ENCODE measurements at regions of chr2 and their contacts with region 1.

Region 1: GRCh38 chr2:102033031-102033749 is 41.4 kb downstream of the IL1R2 start:
- DNase-seq: peak in 1 of 2 experiments; percentile 67
- ATAC-seq: peak; percentile 65 to 86
- H3K4me3 ChIP-seq: no peak overlapping the region
- H3K27ac ChIP-seq: peak overlapping the region; percentile 71 to 82
- H3K4me1 ChIP-seq: peaks cover 32% of the 10 kb centered on the region
- CTCF ChIP-seq: no peak
- EP300 ChIP-seq: no peak
- POLR2A ChIP-seq: no peak
- RAD21 ChIP-seq: no peak

Region 2: GRCh38 chr2:101958061-101958460 is 75.1 kb before region 1 on chr2:
- CTCF ChIA-PET with region 1: no interaction called
- POLR2A ChIA-PET with region 1: no interaction called
- DNase-seq: no peak
- ATAC-seq: no peak
- H3K4me3 ChIP-seq: no peak overlapping the region
- H3K27ac ChIP-seq: no peak overlapping the region
- H3K4me1 ChIP-seq: no peaks in the 10 kb centered on the region
- CTCF ChIP-seq: no peak
- EP300 ChIP-seq: no peak
- POLR2A ChIP-seq: no peak
- RAD21 ChIP-seq: no peak

Region 3: GRCh38 chr2:102005989-102006885 is 27.0 kb before region 1 on chr2:
- CTCF ChIA-PET with region 1: interaction called, 10 read pairs
- POLR2A ChIA-PET with region 1: no interaction called
- DNase-seq: peak; percentile 43 to 52
- ATAC-seq: peak; percentile 86 to 98
- H3K4me3 ChIP-seq: no peak overlapping the region
- H3K27ac ChIP-seq: peak overlapping the region in 1 of 2 experiments; percentile 45; a peak in 1 of 6 replicates
- H3K4me1 ChIP-seq: peaks cover 4% of the 10 kb centered on the region; the same call in 1 of the 3 replicates
- CTCF ChIP-seq: peak; percentile 72
- EP300 ChIP-seq: no peak
- POLR2A ChIP-seq: no peak
- RAD21 ChIP-seq: peak; percentile 70 to 71

Region 4: GRCh38 chr2:102082571-102083392 is 49.6 kb after region 1 on chr2:
- CTCF ChIA-PET with region 1: no interaction called
- POLR2A ChIA-PET with region 1: no interaction called
- DNase-seq: peak in 1 of 2 experiments; percentile 23
- ATAC-seq: peak; percentile 66 to 78
- H3K4me3 ChIP-seq: no peak overlapping the region
- H3K27ac ChIP-seq: peak overlapping the region; percentile 57 to 60; a peak in 5 of 6 replicates
- H3K4me1 ChIP-seq: peaks cover 29% of the 10 kb centered on the region
- CTCF ChIP-seq: no peak
- EP300 ChIP-seq: no peak; a peak in 1 of 5 replicates
- POLR2A ChIP-seq: no peak
- RAD21 ChIP-seq: no peak